ENCODE measurements at regions of chrX and their contacts with region 1.

Region 1: GRCh38 chrX:20378291-20378920 is 111.7 kb upstream of the RPS6KA3 start:
- DNase-seq: no peak
- ATAC-seq: peak; percentile 28
- H3K4me3 Mint-ChIP-seq: no peak overlapping the region
- H3K27ac Mint-ChIP-seq: no peak overlapping the region
- H3K4me1 Mint-ChIP-seq: peaks cover 26% of the 10 kb centered on the region
- H3K27me3 Mint-ChIP-seq: no peaks in the 10 kb centered on the region
- CTCF ChIP-seq: no peak

Region 2: GRCh38 chrX:20217275-20217674 is 161.1 kb before region 1 on chrX:
- CTCF ChIA-PET with region 1: no interaction called
- POLR2A ChIA-PET with region 1: no interaction called
- intact Hi-C with region 1: no loop called
- DNase-seq: no peak
- ATAC-seq: no peak
- H3K4me3 Mint-ChIP-seq: no peak overlapping the region
- H3K27ac Mint-ChIP-seq: no peak overlapping the region
- H3K4me1 Mint-ChIP-seq: peaks cover 18% of the 10 kb centered on the region
- H3K27me3 Mint-ChIP-seq: no peaks in the 10 kb centered on the region
- CTCF ChIP-seq: no peak

Region 3: DNA sequence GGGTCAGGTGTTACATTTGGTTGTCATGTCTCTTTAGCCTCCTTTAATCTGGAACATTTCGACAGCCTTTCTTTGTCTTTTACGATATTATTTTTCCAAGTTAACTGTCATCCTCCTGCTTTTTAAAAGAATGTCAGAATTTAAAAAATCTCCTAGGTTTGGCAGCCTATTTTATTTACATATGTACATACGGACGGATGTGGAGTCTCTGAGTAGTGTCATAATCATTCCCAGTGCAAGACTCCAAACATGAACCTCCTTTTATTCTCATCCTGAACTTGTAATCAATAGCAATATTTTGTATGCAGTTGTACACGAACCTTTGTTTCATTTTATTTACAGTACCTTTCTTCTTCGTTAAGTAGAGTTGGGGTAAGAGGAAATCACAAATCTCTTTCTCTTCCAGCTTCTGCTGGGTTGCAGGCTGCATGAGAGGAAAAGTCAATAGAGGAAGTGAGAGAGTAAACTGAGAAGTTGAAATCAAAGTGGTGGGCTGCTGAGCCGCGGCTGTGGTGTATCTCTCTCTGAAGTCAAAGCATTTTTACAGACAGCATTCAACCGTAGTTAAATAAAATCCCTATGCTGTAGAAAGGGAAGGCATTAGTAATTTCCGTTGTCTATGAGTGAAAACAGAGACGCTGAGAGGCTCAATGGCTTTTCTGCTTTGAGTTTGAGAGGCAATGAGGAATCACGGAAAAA is 57.8 kb before region 1 on chrX:
- CTCF ChIA-PET with region 1: no interaction called
- POLR2A ChIA-PET with region 1: interaction called, 3 read pairs
- intact Hi-C with region 1: loop called (anchors 2 kb)
- DNase-seq: peak; percentile 16
- ATAC-seq: peak; percentile 92
- H3K4me3 Mint-ChIP-seq: peak overlapping the region; percentile 54
- H3K27ac Mint-ChIP-seq: peak overlapping the region; percentile 82
- H3K4me1 Mint-ChIP-seq: peaks cover 40% of the 10 kb centered on the region
- H3K27me3 Mint-ChIP-seq: no peaks in the 10 kb centered on the region
- CTCF ChIP-seq: no peak

Region 4: DNA sequence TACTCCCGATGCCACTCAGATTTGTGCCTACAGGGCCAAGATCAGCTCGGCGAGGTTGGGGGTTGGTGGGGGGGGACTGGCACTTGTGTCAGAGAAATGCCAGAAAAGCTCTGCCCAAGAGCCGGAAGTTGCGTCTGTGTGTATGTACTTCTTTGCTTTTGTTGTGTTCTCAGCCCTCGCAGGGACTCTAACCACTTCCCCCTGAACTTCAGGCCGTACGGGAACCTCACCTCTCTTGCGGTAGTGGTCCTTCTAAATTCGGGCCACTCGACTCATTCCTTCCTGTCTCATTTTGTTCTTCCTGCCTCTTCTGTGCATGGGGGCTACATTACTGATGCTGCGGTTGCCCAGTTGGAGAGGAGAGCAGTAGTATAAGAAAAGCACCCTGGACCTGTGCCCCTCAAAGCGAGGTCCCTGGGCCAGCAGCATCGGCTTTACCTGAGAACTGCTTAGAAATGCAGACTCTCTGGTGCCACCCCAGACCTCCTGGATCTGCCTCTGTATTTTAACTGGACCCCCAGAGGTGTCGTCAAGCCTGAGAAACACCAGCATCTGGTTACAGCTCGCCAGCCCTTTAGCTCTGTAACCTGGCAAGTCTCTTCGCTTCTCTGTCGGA is 34.6 kb after region 1 on chrX:
- CTCF ChIA-PET with region 1: no interaction called
- POLR2A ChIA-PET with region 1: no interaction called
- intact Hi-C with region 1: loop called (anchors 5 kb)
- DNase-seq: peak; percentile 16
- ATAC-seq: peak; percentile 71
- H3K4me3 Mint-ChIP-seq: peak overlapping the region; percentile 69
- H3K27ac Mint-ChIP-seq: peak overlapping the region; percentile 83
- H3K4me1 Mint-ChIP-seq: peaks cover 23% of the 10 kb centered on the region
- H3K27me3 Mint-ChIP-seq: no peaks in the 10 kb centered on the region
- CTCF ChIP-seq: no peak

Measured in activated B cell treated with CpG ODN at 0.5 μM for 24 hours (primary cell).